GM12878 (cell line): ENCODE measurements at regions of chr22 and their contacts with region 1.

Region 1: GRCh38 chr22:26364066-26365015 is 64.7 kb upstream of the ASPHD2 start:
- DNase-seq: peak; percentile 27
- ATAC-seq: peak; percentile 96
- H3K4me3 ChIP-seq: no peak overlapping the region
- H3K27ac ChIP-seq: no peak overlapping the region
- H3K4me1 ChIP-seq: no peaks in the 10 kb centered on the region
- H3K27me3 ChIP-seq: no peaks in the 10 kb centered on the region
- CTCF ChIP-seq: peak; percentile 72 to 78 (median 75)
- EP300 ChIP-seq: no peak
- POLR2A ChIP-seq: no peak
- RAD21 ChIP-seq: peak; percentile 80

Region 2: DNA sequence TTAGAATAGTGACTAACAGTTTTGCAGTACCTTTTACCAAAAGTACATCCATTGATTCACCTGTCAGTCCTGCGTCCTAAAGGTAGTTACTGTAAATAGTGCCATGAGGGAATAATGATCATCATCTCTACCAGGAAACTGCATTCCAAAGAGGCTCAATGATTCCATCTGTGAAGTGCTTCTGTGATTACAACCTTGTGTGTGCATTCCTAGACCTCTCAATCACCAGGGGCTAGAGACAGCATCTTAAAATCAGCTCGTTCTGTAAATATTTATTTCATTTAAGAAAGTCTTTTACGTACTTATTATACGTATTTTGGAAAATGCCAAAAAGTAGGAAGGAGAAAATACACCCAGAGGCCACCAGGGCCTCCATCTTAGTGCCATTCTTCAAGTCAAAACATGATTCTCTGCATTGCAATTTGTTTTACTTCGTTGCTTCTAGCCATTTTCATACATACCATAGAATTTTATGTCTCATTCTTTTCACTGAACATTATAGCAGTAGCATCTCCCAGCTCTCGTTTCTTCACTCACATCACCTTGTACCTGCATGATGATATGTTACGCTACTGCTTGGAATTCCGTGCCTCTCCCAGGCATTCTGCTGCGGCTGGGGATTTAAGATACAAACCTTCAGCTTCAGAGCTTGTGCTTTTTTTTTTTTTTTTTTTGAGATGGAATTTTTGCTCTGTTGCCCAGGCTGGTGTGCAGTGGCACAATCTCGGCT is 78.1 kb before region 1 on chr22:
- CTCF ChIA-PET with region 1: no interaction called
- POLR2A ChIA-PET with region 1: no interaction called
- RAD21 ChIA-PET with region 1: no interaction called
- SMC1A ChIA-PET with region 1: no interaction called
- in situ Hi-C with region 1: no loop called
- intact Hi-C with region 1: no loop called
- DNase-seq: no peak
- ATAC-seq: no peak
- H3K4me3 ChIP-seq: no peak overlapping the region
- H3K27ac ChIP-seq: no peak overlapping the region
- H3K4me1 ChIP-seq: no peaks in the 10 kb centered on the region
- H3K27me3 ChIP-seq: no peaks in the 10 kb centered on the region
- CTCF ChIP-seq: no peak
- EP300 ChIP-seq: no peak
- POLR2A ChIP-seq: no peak
- RAD21 ChIP-seq: no peak

Region 3: DNA sequence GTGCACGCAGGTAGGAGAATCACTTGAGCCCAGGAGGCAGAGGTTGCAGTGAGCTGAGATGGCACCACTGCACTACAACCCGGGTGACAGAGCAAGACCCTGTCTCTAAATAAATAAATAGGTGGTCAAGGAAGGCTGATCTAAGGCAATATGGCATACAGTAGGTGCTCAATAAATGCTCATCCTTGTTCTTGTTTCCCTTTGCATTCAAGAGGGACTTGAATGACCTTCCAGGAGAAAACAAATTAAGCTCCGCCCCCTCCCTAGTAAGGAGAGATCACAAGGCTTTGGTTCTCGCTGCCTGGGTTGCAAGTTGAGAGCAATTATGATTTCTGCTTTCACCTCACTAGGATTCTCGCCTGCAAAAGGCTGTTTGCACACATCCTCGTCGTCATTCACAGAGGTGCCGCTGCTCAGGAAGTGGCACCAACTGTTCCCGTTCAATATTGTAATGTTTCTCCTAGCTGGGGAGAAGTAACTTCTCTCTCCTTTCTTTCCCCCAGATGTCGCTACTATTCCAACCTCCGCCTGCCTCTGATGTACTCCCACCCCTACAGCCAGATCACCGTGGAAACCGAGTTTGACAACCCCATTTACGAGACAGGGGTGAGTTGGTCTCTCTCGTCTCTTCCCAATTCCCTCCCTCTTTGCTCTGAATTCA is 13.0 kb after region 1 on chr22:
- CTCF ChIA-PET with region 1: interaction called, 31 read pairs
- POLR2A ChIA-PET with region 1: no interaction called
- RAD21 ChIA-PET with region 1: no interaction called
- SMC1A ChIA-PET with region 1: interaction called, 4 read pairs
- in situ Hi-C with region 1: no loop called
- intact Hi-C with region 1: no loop called
- DNase-seq: no peak
- ATAC-seq: no peak
- H3K4me3 ChIP-seq: no peak overlapping the region
- H3K27ac ChIP-seq: no peak overlapping the region
- H3K4me1 ChIP-seq: no peaks in the 10 kb centered on the region
- H3K27me3 ChIP-seq: peaks cover 3 to 9% of the 10 kb centered on the region in 2 experiments
- CTCF ChIP-seq: no peak; a peak in 1 of 6 replicates
- EP300 ChIP-seq: no peak
- POLR2A ChIP-seq: no peak
- RAD21 ChIP-seq: no peak

Region 4: DNA sequence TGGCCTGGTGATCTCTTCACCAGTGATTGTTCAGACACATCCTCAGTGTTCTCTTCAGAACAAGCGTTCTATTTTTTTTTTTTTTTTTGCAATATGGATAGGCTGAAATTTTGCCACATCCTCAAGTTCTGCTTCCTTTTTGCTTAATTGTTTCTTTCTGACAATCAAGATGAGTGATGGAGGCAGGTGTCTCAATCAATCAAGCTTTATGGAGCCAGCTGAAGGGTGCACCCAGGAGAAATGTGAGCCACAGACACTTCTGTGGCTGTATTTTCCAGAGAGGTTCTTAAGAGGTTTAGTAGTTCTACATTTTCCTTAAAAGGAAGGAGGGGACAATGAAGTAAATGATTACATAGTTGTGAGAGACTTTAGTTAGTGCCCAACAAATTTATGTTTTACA is 20.8 kb after region 1 on chr22:
- CTCF ChIA-PET with region 1: interaction called, 31 read pairs
- POLR2A ChIA-PET with region 1: no interaction called
- RAD21 ChIA-PET with region 1: interaction called, 6 read pairs
- SMC1A ChIA-PET with region 1: interaction called, 4 read pairs
- in situ Hi-C with region 1: no loop called
- intact Hi-C with region 1: no loop called
- DNase-seq: no peak
- ATAC-seq: no peak
- H3K4me3 ChIP-seq: no peak overlapping the region
- H3K27ac ChIP-seq: no peak overlapping the region
- H3K4me1 ChIP-seq: no peaks in the 10 kb centered on the region
- H3K27me3 ChIP-seq: peaks cover 0 to 6% of the 10 kb centered on the region in 2 experiments; a peak in 3 of 4 replicates
- CTCF ChIP-seq: no peak
- EP300 ChIP-seq: no peak
- POLR2A ChIP-seq: no peak
- RAD21 ChIP-seq: no peak

Region 5: GRCh38 chr22:26391623-26392022 is 27.3 kb after region 1 on chr22:
- CTCF ChIA-PET with region 1: interaction called, 18 read pairs
- POLR2A ChIA-PET with region 1: no interaction called
- RAD21 ChIA-PET with region 1: interaction called, 3 read pairs
- SMC1A ChIA-PET with region 1: interaction called, 4 read pairs
- in situ Hi-C with region 1: no loop called
- intact Hi-C with region 1: no loop called
- DNase-seq: no peak
- ATAC-seq: no peak
- H3K4me3 ChIP-seq: no peak overlapping the region
- H3K27ac ChIP-seq: no peak overlapping the region
- H3K4me1 ChIP-seq: no peaks in the 10 kb centered on the region
- H3K27me3 ChIP-seq: no peaks in the 10 kb centered on the region; a peak in 2 of 4 replicates
- CTCF ChIP-seq: no peak
- EP300 ChIP-seq: no peak
- POLR2A ChIP-seq: no peak
- RAD21 ChIP-seq: no peak

Region 6: DNA sequence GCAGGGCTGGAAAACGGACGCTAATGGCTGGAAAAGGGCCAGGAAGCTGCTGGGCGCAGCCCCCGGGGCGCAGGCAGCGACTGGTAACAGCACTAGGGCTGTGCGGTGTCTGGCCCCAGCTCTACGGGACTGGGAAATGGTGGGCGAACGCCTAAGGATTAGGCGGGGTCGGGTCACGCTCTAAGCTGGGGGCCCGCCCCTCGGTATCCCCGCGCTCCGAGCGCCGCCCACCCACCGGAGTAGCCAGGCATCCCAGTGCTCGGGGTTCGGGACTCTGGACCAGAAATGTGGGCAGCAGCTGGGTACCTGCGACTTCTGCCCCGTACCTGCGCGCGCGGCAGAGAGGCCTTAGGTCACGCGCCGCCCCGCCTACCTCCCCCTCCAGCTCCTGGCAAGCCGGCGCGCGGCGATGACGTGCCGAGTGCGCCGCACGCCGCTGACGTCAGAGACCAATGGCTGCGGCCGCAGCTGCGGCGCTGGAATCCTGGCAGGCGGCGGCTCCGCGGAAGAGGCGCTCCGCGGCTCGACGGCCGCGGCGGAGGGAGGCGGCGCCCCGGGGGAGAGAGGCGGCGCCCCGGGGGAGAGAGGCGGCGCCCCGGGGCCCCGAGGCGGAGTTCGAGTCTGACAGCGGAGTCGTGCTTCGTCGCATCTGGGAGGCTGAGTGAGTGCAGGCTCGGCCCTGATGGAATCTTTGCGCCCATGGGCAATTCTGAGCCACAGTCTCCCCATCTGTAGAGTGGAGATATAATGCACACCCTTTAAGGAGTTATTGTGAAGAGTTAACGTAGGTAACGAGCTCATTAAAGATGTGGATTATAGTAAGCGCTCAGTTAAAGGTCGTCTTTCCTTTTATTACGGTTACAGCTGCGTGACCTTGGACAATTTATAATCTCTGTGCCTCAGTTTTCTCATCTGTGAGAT is 119.4 kb after region 1 on chr22 and contains the starts of genes HPS4 and SRRD:
- CTCF ChIA-PET with region 1: interaction called, 13 read pairs
- POLR2A ChIA-PET with region 1: interaction called, 3 read pairs
- RAD21 ChIA-PET with region 1: interaction called, 7 read pairs
- SMC1A ChIA-PET with region 1: interaction called, 7 read pairs
- in situ Hi-C with region 1: no loop called
- intact Hi-C with region 1: no loop called
- DNase-seq: peak; percentile 56
- ATAC-seq: peak; percentile 79
- H3K4me3 ChIP-seq: peak within 1 kb of the TSS; percentile 97
- H3K27ac ChIP-seq: peak within 1 kb of the TSS; percentile 88
- H3K4me1 ChIP-seq: peaks cover 23% of the 10 kb centered on the region
- H3K27me3 ChIP-seq: no peaks in the 10 kb centered on the region
- CTCF ChIP-seq: no peak
- EP300 ChIP-seq: peak; percentile 12 to 19; a peak in 1 of 4 replicates
- POLR2A ChIP-seq: peak; percentile 95
- RAD21 ChIP-seq: no peak
- polyA plus RNA-seq, gene HPS4: 11.7 to 12.3 TPM
- polyA plus RNA-seq, gene SRRD: 4.1 to 15.4 TPM